Transverse colon (tissue), 4 donors: ENCODE measurements at regions of chr1 and their contacts with region 1.

Region 1: GRCh38 chr1:108327534-108328462 is 83.9 kb upstream of the NBPF4 start:
- DNase-seq: no peak
- H3K4me3 ChIP-seq: no peak overlapping the region
- H3K27ac ChIP-seq: no peak overlapping the region
- H3K4me1 ChIP-seq: no peaks in the 10 kb centered on the region
- H3K27me3 ChIP-seq: no peaks in the 10 kb centered on the region
- CTCF ChIP-seq: no peak
- EP300 ChIP-seq: no peak
- POLR2A ChIP-seq: no peak

Region 2: DNA sequence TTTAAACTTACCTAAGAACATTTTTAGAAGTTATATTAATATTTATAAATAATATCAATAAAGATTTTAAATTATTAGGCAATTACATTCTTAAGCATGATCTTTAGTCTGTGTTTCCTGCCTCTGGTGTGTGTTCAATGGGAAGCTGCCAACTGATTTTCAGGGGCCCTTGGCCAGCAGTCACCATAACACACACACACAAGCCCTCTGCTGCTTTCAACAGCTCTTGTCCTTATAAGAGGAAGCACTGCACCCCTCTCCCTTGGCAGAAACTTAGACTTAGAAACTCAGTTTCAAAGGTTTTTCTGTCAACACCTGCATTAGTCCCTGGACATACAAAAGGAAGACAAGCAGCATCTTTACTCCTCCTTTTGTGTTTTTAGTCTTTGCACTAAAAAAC is 444.2 kb before region 1 on chr1:
- in situ Hi-C with region 1: no loop called
- intact Hi-C with region 1: no loop called
- DNase-seq: no peak
- H3K4me3 ChIP-seq: no peak overlapping the region
- H3K27ac ChIP-seq: no peak overlapping the region
- H3K4me1 ChIP-seq: no peaks in the 10 kb centered on the region
- H3K27me3 ChIP-seq: no peaks in the 10 kb centered on the region
- CTCF ChIP-seq: no peak
- EP300 ChIP-seq: no peak
- POLR2A ChIP-seq: no peak

Region 3: GRCh38 chr1:108482708-108483107 is 154.9 kb after region 1 on chr1:
- in situ Hi-C with region 1: loop called in 1 of 4 experiments (anchors 25 kb)
- intact Hi-C with region 1: no loop called
- DNase-seq: no peak
- H3K4me3 ChIP-seq: no peak overlapping the region
- H3K27ac ChIP-seq: no peak overlapping the region
- H3K4me1 ChIP-seq: no peaks in the 10 kb centered on the region
- H3K27me3 ChIP-seq: no peaks in the 10 kb centered on the region
- CTCF ChIP-seq: no peak
- EP300 ChIP-seq: no peak
- POLR2A ChIP-seq: no peak

Region 4: GRCh38 chr1:108609483-108610049 is 281.8 kb after region 1 on chr1:
- in situ Hi-C with region 1: loop called in 1 of 4 experiments (anchors 25 kb)
- intact Hi-C with region 1: no loop called
- DNase-seq: no peak
- H3K4me3 ChIP-seq: no peak overlapping the region
- H3K27ac ChIP-seq: no peak overlapping the region
- H3K4me1 ChIP-seq: no peaks in the 10 kb centered on the region
- H3K27me3 ChIP-seq: no peaks in the 10 kb centered on the region
- CTCF ChIP-seq: no peak
- EP300 ChIP-seq: no peak
- POLR2A ChIP-seq: no peak